Naive thymus-derived CD4-positive, alpha-beta T cell (primary cell): ENCODE measurements at regions of chr5 and their contacts with region 1.

Region 1: GRCh38 chr5:69166686-69167492 is at the start of gene CCNB1:
- DNase-seq: peak; percentile 91 to 98 (median 94)
- ATAC-seq: peak; percentile 100
- H3K4me3 ChIP-seq: peak within 1 kb of the TSS; percentile 78
- H3K4me3 Mint-ChIP-seq: peak within 1 kb of the TSS; percentile 88 to 98 (median 94)
- H3K27ac ChIP-seq: peak within 1 kb of the TSS; percentile 68
- H3K27ac Mint-ChIP-seq: peak within 1 kb of the TSS; percentile 77 to 94 (median 90)
- H3K4me1 ChIP-seq: peaks cover 5 to 15% of the 10 kb centered on the region in 2 donors
- H3K4me1 Mint-ChIP-seq: peaks cover 17 to 44% (median 26%) of the 10 kb centered on the region in 7 donors
- H3K27me3 ChIP-seq: no peaks in the 10 kb centered on the region
- H3K27me3 Mint-ChIP-seq: no peaks in the 10 kb centered on the region
- total RNA-seq, gene CCNB1: 1.3 to 110 (median 3.4) TPM

Region 2: GRCh38 chr5:67879620-67880510 is 1287.0 kb before region 1 on chr5:
- CTCF ChIA-PET with region 1: no interaction called
- POLR2A ChIA-PET with region 1: no interaction called
- intact Hi-C with region 1: no loop called
- DNase-seq: no peak
- ATAC-seq: no peak
- H3K4me3 ChIP-seq: no peak overlapping the region
- H3K4me3 Mint-ChIP-seq: no peak overlapping the region
- H3K27ac ChIP-seq: no peak overlapping the region
- H3K27ac Mint-ChIP-seq: no peak overlapping the region
- H3K4me1 ChIP-seq: no peaks in the 10 kb centered on the region
- H3K4me1 Mint-ChIP-seq: no peaks in the 10 kb centered on the region
- H3K27me3 ChIP-seq: no peaks in the 10 kb centered on the region
- H3K27me3 Mint-ChIP-seq: peaks cover 0 to 15% (median 13%) of the 10 kb centered on the region in 5 donors

Region 3: GRCh38 chr5:69032009-69032408 is 134.9 kb before region 1 on chr5:
- CTCF ChIA-PET with region 1: no interaction called
- POLR2A ChIA-PET with region 1: no interaction called
- intact Hi-C with region 1: no loop called
- DNase-seq: no peak
- ATAC-seq: no peak
- H3K4me3 ChIP-seq: no peak overlapping the region
- H3K4me3 Mint-ChIP-seq: no peak overlapping the region
- H3K27ac ChIP-seq: no peak overlapping the region
- H3K27ac Mint-ChIP-seq: no peak overlapping the region
- H3K4me1 ChIP-seq: no peaks in the 10 kb centered on the region
- H3K4me1 Mint-ChIP-seq: no peaks in the 10 kb centered on the region
- H3K27me3 ChIP-seq: no peaks in the 10 kb centered on the region
- H3K27me3 Mint-ChIP-seq: peaks cover 0 to 38% (median 13%) of the 10 kb centered on the region in 5 donors

Region 4: GRCh38 chr5:69136293-69136692 is 30.6 kb before region 1 on chr5:
- CTCF ChIA-PET with region 1: no interaction called
- POLR2A ChIA-PET with region 1: no interaction called
- intact Hi-C with region 1: loop called in 1 of 2 experiments (anchors 1 kb)
- DNase-seq: no peak
- ATAC-seq: no peak
- H3K4me3 ChIP-seq: no peak overlapping the region
- H3K4me3 Mint-ChIP-seq: no peak overlapping the region
- H3K27ac ChIP-seq: no peak overlapping the region
- H3K27ac Mint-ChIP-seq: peak overlapping the region in 1 of 9 donors; percentile 44
- H3K4me1 ChIP-seq: no peaks in the 10 kb centered on the region
- H3K4me1 Mint-ChIP-seq: no peaks in the 10 kb centered on the region
- H3K27me3 ChIP-seq: no peaks in the 10 kb centered on the region
- H3K27me3 Mint-ChIP-seq: no peaks in the 10 kb centered on the region

Region 5: GRCh38 chr5:69189162-69190086 is 22.5 kb after region 1 on chr5 and contains the start of gene CENPH:
- CTCF ChIA-PET with region 1: no interaction called
- POLR2A ChIA-PET with region 1: interaction called, 11 read pairs
- intact Hi-C with region 1: loop called (anchors 1 kb)
- DNase-seq: peak; percentile 83 to 92 (median 90)
- ATAC-seq: peak; percentile 99
- H3K4me3 ChIP-seq: peak within 1 kb of the TSS; percentile 99
- H3K4me3 Mint-ChIP-seq: peak within 1 kb of the TSS; percentile 86 to 96 (median 92)
- H3K27ac ChIP-seq: peak within 1 kb of the TSS; percentile 75
- H3K27ac Mint-ChIP-seq: peak within 1 kb of the TSS; percentile 85 to 96 (median 92)
- H3K4me1 ChIP-seq: peaks cover 9 to 11% of the 10 kb centered on the region in 2 donors
- H3K4me1 Mint-ChIP-seq: peaks cover 0 to 19% (median 16%) of the 10 kb centered on the region in 7 donors
- H3K27me3 ChIP-seq: no peaks in the 10 kb centered on the region
- H3K27me3 Mint-ChIP-seq: no peaks in the 10 kb centered on the region
- total RNA-seq, gene CENPH: 3.4 to 25.3 (median 8.2) TPM